H1 (cell line): ENCODE measurements at regions of chr17 and their contacts with region 1.

Region 1: DNA sequence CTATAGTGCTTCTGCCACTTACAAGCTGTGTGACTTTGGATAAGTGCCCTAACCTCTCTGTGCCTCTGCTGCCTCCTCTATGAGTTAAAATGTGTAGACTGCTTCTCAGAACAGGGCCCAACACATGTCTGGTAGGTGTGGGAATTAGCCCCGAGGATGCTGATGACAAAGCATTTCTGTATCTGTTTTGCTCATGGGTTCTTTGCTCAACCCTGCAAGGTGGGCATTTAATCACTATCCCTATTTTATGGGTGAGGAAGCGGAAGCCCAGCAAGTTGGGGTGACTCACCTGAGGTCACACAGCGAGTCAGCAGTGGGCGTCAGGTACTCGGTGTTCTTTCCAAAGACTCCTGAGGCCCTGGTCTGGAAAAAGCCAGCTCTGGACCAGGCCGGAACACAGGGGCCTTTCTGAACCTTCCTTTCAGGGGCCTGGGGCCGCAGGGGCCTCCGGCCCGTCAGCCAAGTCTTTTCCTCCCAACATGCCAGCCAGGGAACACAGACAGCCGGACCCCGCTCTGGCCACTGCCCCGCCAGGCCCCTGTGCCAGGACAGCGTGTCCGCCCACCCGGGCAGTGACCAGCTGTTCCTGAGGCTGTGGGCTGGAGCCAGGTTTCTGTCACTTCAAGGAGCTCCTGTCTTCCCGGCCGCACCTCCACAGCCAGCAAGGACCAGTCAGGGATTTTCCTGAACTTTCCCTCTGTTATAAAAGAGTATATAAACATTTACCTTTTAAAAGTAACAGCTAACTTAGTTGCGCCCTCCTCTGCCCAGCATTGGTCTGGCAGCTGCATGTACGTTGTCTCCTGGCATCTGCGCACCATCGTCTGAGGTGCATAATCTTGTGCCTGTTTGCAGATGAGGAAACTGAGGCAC is 62.5 kb downstream of the SREBF1 start:
- DNase-seq: no peak
- H3K4me3 ChIP-seq: no peak overlapping the region
- H3K27ac ChIP-seq: no peak overlapping the region
- H3K4me1 ChIP-seq: peaks cover under 1 to 8% (median 3%) of the 10 kb centered on the region in 4 experiments; a peak in 5 of 7 replicates
- H3K27me3 ChIP-seq: peaks cover 0 to 5% (median under 1%) of the 10 kb centered on the region in 4 experiments; a peak in 2 of 7 replicates
- CTCF ChIP-seq: peak; percentile 51 to 60 (median 51); a peak in 3 of 4 replicates
- EP300 ChIP-seq: no peak
- POLR2A ChIP-seq: no peak
- RAD21 ChIP-seq: peak; percentile 54 to 66

Region 2: DNA sequence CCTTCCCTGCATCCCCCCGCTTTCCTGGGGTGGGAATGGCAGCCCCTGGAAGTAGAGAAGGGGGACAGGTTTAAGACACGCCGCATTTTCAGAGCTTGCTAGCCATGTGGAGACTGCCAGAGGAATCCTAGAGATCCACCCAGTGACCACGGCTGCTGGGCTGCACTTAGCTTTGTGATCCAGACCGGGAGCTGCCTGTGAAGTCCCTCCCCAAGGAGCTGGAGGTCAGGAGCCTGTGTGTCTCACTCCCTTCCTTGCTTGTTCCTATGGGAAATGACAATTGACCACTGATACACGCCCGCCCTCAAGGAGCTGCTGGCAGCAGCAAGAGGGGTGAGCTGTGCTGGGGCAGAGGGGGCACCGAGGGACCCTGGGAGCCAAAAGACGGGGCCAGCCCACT is 11.1 kb before region 1 on chr17:
- CTCF ChIA-PET with region 1: interaction called, 15 read pairs
- POLR2A ChIA-PET with region 1: interaction called, 5 read pairs
- DNase-seq: no peak
- H3K4me3 ChIP-seq: no peak overlapping the region
- H3K27ac ChIP-seq: no peak overlapping the region
- H3K4me1 ChIP-seq: peaks cover 0 to 9% (median 3%) of the 10 kb centered on the region in 4 experiments; a peak in 4 of 7 replicates
- H3K27me3 ChIP-seq: peaks cover 0 to 2% (median 0%) of the 10 kb centered on the region in 4 experiments; a peak in 2 of 7 replicates
- CTCF ChIP-seq: no peak
- EP300 ChIP-seq: no peak
- POLR2A ChIP-seq: no peak
- RAD21 ChIP-seq: no peak

Region 3: DNA sequence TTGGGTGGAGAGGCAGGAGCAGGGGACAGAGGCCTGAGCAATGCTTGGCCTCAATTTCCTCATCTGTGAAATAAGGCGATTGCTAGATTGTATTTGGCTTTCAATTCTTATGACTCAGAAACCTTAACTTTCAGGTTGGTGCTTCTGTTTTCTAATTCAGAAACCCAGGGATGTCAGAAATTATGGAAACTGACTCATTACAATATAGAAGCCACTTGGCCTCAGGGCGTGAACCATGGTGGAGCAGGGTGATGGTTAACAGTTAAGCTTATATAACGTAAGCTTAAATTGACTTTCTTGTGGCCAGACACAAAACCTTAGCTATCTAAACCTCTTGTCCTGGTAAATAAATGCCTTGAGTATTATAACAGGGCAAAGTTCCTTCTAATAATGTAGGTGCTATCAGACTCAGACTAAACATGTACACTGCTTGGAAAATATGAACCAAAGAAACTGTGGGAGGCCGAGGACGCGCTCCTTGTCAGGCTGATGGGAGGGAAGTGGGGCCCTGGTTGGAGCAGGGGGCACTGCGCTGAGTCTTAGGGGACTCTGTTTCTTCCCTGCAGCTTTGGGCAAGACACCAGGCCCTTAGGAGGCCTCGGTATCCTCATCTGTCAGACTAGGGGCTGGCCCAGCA is 79.7 kb after region 1 on chr17:
- CTCF ChIA-PET with region 1: no interaction called
- POLR2A ChIA-PET with region 1: no interaction called
- DNase-seq: no peak
- H3K4me3 ChIP-seq: no peak overlapping the region
- H3K27ac ChIP-seq: no peak overlapping the region
- H3K4me1 ChIP-seq: peaks cover 0 to 18% (median 12%) of the 10 kb centered on the region in 4 experiments; a peak in 6 of 7 replicates
- H3K27me3 ChIP-seq: no peaks in the 10 kb centered on the region; a peak in 1 of 7 replicates
- CTCF ChIP-seq: no peak
- EP300 ChIP-seq: no peak
- POLR2A ChIP-seq: no peak
- RAD21 ChIP-seq: no peak

Region 4: GRCh38 chr17:17950806-17951205 is 176.6 kb after region 1 on chr17:
- CTCF ChIA-PET with region 1: no interaction called
- POLR2A ChIA-PET with region 1: no interaction called
- DNase-seq: no peak
- H3K4me3 ChIP-seq: no peak overlapping the region
- H3K27ac ChIP-seq: no peak overlapping the region
- H3K4me1 ChIP-seq: peaks cover 0 to 8% (median under 1%) of the 10 kb centered on the region in 4 experiments; a peak in 1 of 7 replicates
- H3K27me3 ChIP-seq: no peaks in the 10 kb centered on the region
- CTCF ChIP-seq: peak; percentile 61 to 72 (median 61)
- EP300 ChIP-seq: no peak
- POLR2A ChIP-seq: no peak
- RAD21 ChIP-seq: peak; percentile 9 to 47; a peak in 1 of 4 replicates